Right ventricle myocardium inferior (tissue), 1 donor: ENCODE measurements at regions of chr19 and their contacts with region 1.

Region 1: GRCh38 chr19:39970675-39971379 is at the start of gene PSMC4:
- DNase-seq: peak; percentile 99
- ATAC-seq: peak; percentile 100
- total RNA-seq, gene PSMC4: 73.6 TPM

Region 2: DNA sequence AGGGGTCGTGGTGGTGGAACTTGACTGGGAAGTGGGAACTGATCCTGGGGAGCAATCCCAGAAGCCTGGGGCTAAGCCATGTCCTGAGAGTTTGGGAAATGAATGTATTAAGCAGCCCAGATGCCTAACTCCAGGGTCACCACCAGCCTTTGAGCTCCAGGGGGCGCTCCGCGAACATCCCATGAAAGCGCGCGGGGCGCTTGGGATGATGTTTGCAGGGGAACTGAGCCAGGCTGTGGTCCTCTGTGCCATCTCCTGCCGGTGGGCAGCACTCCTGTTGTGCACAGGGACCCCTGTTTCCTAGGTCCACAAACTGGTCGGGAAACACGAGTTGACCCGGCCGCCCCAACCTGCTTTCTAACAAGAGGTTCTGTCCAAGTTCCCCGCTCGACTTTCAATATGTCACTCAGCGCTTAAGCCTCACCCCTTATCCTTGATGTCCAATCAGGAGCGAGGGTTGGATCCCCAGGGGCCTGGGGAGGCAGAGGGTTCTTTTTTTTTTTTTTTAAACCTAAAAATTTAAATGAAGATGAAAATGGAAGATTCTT is 177.8 kb before region 1 on chr19:
- intact Hi-C with region 1: loop called (anchors 1 kb)
- DNase-seq: peak; percentile 89
- ATAC-seq: peak; percentile 96

Region 3: DNA sequence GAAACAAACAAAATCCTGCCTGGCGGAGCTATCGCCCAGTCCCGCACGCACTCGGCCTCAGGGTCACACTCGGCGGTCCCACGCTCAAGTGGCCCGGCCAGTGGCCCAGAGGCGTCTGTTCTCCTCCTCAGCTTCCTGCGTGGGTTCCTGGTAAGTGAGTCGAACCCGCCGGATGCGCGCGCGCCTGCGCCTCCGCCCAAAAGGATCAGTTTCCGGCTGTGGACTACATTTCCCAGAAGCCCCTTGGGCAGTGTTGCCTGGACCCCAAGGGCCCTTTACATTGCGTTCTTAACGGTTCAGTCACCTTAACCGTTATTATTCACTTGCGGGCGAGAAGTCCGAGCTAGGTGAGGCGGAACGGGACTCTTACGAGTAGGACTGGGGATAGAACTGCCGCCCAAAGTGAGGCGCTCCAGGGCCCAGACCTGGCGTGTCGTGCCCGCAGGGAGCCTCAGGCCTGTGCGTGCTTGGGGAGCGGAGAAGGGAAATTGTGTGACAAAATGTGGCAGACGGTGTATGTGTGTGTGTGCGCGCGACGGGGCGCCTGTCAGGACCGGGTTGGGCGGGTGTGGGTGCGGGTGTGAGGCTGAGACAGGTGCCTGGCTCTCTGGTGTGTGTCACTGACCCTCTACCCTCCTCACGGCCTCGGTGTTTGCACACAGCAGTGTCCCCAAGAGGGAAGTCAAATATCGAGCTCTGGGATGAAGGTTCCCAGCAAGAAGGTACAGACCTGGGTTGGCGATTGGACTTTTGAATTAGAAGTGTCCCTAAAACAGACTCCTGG is 26.2 kb after region 1 on chr19 and contains the start of gene ZNF546:
- intact Hi-C with region 1: loop called (anchors 1 kb)
- DNase-seq: peak; percentile 97
- ATAC-seq: peak; percentile 98
- total RNA-seq, gene ZNF546: 5.1 TPM